OCI-LY7 (cell line): ENCODE measurements at regions of chr4 and their contacts with region 1.

Region 1: GRCh38 chr4:120877021-120877420 is 45.5 kb downstream of the PRDM5 start:
- DNase-seq: no peak
- H3K4me3 ChIP-seq: no peak overlapping the region
- H3K27ac ChIP-seq: no peak overlapping the region
- H3K4me1 ChIP-seq: no peaks in the 10 kb centered on the region
- CTCF ChIP-seq: no peak

Region 2: GRCh38 chr4:120850018-120850599 is 26.9 kb before region 1 on chr4:
- CTCF ChIA-PET with region 1: no interaction called
- POLR2A ChIA-PET with region 1: no interaction called
- intact Hi-C with region 1: no loop called
- DNase-seq: no peak
- H3K4me3 ChIP-seq: no peak overlapping the region
- H3K27ac ChIP-seq: no peak overlapping the region
- H3K4me1 ChIP-seq: peaks cover 4% of the 10 kb centered on the region
- CTCF ChIP-seq: no peak

Region 3: DNA sequence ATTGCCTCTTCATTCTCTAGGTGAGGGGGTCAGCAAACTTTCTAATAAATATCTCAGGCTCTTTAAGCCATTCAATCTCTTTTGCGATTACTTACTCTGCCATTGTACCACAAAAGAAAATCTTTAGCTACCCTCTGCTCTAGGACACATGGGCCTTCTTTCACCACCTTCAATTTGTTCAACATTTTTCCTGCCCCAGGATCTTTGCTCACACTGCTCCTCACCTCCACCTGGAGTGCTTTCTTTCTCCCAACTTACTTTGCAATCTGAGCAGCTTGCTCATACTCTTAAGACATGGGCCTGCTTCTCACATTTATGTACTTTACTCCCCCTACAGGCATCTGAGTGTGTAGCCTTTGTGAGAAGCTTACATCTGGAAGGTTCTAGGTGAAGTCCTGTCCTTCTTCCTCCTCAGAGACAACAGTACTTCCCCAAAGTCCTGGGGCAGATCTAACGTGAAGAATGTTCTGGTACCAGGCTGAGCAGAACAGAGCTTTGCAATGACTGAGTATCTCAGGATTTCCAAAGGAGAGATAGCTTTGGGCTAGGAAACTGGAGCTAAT is 100.5 kb after region 1 on chr4:
- CTCF ChIA-PET with region 1: interaction called, 11 read pairs
- POLR2A ChIA-PET with region 1: interaction called, 3 read pairs
- intact Hi-C with region 1: no loop called
- DNase-seq: peak; percentile 70
- H3K4me3 ChIP-seq: no peak overlapping the region
- H3K27ac ChIP-seq: no peak overlapping the region
- H3K4me1 ChIP-seq: no peaks in the 10 kb centered on the region
- CTCF ChIP-seq: peak; percentile 79

Region 4: DNA sequence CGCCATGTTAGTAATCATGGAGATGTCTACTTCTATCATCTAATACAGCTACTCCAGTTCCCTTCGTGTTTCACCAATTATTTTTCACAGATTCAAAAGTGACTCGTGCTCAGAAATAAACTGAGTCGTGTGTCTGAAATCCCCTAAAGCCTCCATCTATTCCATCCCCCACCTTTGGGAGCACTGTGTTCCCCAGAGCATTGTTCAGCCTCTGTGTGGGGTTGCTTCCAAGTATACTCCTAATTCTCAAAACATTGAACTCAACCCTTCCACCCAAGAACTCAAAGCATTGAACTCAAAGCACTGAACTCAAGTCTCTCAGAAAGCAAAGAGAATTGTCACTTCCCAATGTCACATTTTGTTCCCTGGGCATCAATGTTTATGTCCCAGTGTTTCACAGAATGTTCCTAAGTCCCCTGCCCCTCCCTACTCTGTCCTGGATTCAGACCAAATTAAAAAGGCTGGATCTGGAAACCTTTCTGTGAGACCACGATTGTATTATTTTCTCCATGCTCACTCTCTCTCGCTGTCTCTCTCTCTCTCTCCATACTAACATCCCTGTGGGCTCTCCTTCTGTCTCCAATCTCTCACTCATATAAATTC is 642.3 kb after region 1 on chr4:
- CTCF ChIA-PET with region 1: no interaction called
- POLR2A ChIA-PET with region 1: no interaction called
- intact Hi-C with region 1: no loop called
- DNase-seq: no peak
- H3K4me3 ChIP-seq: no peak overlapping the region
- H3K27ac ChIP-seq: no peak overlapping the region
- H3K4me1 ChIP-seq: no peaks in the 10 kb centered on the region
- CTCF ChIP-seq: no peak